Ovary (tissue), 10 donors: ENCODE measurements at regions of chr18 and their contacts with region 1.

Region 1: GRCh38 chr18:76398896-76399612 is 96.0 kb downstream of the ZNF516 start:
- DNase-seq: peak; percentile 81 to 92 (median 91)
- H3K4me3 ChIP-seq: no peak overlapping the region
- H3K27ac ChIP-seq: peak overlapping the region in 1 of 2 donors; percentile 77
- H3K4me1 ChIP-seq: peaks cover 12% of the 10 kb centered on the region
- H3K27me3 ChIP-seq: no peaks in the 10 kb centered on the region
- CTCF ChIP-seq: peak; percentile 87 to 96 (median 92)
- EP300 ChIP-seq: no peak
- POLR2A ChIP-seq: no peak

Region 2: DNA sequence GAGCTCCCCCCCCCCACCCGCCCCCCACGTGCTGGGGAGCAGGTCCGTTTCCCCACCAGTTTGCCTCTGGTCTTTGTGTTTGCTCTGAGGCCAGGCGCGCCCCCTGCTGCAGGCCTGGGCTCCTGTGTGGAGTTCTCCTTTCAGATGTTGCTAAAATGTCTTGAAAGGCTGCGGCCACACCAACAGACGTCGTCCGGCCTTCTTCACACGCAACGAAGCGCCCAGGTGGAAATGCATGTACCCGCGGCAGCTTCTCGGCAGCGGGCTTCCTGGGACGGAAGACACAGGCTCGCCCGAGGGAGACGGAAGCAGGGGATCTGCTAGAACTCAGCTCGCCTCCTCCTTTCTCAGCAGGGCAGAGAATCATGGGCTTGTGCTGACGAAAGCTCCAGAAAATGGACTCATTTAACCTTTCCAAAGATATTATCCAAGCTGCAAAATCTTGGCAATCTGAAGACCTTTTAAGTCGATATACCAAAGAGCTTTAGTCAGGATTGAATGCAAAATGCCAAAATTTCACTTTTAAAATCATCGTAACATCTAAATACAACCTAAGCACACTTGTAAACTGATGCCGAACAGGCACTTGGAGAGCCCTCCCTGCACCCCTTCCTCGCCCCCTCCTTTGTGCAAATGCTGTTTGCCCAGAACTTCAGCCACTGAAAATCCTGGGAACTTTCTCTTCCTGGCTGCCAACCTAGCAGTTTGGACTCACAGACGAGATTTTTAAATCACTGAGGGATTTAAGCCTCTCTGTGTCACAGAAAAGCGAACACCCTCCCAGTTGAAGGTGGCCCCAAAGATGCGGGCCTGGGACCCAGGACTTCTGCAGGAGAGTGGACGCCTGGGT is 221.5 kb after region 1 on chr18:
- intact Hi-C with region 1: loop called in 1 of 4 experiments (anchors 5 kb)
- DNase-seq: peak; percentile 73 to 86 (median 82)
- H3K4me3 ChIP-seq: peak overlapping the region; percentile 24
- H3K27ac ChIP-seq: peak overlapping the region; percentile 85 to 88
- H3K4me1 ChIP-seq: peaks cover 5% of the 10 kb centered on the region
- H3K27me3 ChIP-seq: no peaks in the 10 kb centered on the region
- CTCF ChIP-seq: peak in 2 of 3 donors; percentile 40 to 56
- EP300 ChIP-seq: no peak
- POLR2A ChIP-seq: no peak

Region 3: DNA sequence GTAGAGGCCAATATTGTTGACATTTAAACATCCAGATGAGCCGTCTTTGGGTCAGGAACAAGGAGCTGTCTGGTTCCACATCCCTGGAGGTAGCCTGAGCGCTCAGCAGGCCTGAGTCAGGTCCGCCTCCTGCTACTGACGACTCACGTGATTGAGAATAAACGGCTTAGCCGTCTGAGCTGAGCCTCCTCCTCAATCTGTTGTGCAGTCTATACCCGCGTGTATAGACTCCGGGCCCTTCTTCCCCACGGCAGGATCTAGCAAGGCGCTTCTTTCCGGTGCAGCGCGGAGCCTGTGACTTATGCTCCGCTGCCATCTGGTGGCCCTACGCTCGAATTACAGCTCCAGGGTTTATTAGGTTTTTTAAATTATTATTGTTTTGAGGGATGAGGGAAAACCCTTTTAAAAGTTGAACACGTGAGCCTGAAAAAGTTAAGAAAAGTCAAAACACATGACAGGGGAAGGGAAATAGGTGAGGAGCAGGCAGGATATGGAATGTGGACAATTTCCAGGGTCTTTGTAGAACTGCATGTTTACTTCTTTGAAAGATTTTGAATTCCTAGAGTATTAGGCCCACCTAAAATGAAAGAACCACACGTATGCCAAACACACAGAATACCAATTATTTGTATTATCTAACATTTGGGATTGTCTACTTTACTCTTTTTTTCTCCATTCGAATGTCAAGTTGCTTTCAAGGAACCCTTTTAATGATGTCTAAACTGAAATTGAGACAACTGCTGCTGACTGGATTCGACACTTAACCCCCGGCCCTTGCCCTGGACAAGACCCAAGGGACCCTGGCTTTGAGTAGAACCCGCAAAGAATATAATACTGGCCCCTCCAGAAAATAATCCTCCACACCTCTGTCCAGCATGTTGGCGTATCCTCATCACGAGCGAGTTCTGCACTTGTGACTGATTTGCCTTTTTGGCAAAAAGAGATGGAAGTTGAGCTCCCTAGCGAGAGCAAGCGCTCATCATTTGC is 310.9 kb after region 1 on chr18:
- intact Hi-C with region 1: loop called in 3 of 4 experiments (anchors 1 to 5 kb)
- DNase-seq: peak; percentile 65 to 82 (median 79)
- H3K4me3 ChIP-seq: no peak overlapping the region
- H3K27ac ChIP-seq: no peak overlapping the region
- H3K4me1 ChIP-seq: peaks cover 3% of the 10 kb centered on the region
- H3K27me3 ChIP-seq: no peaks in the 10 kb centered on the region
- CTCF ChIP-seq: peak; percentile 89 to 92 (median 89)
- EP300 ChIP-seq: no peak
- POLR2A ChIP-seq: peak; percentile 23